MCF 10A (cell line): ENCODE measurements at regions of chr7 and their contacts with region 1.

Region 1: DNA sequence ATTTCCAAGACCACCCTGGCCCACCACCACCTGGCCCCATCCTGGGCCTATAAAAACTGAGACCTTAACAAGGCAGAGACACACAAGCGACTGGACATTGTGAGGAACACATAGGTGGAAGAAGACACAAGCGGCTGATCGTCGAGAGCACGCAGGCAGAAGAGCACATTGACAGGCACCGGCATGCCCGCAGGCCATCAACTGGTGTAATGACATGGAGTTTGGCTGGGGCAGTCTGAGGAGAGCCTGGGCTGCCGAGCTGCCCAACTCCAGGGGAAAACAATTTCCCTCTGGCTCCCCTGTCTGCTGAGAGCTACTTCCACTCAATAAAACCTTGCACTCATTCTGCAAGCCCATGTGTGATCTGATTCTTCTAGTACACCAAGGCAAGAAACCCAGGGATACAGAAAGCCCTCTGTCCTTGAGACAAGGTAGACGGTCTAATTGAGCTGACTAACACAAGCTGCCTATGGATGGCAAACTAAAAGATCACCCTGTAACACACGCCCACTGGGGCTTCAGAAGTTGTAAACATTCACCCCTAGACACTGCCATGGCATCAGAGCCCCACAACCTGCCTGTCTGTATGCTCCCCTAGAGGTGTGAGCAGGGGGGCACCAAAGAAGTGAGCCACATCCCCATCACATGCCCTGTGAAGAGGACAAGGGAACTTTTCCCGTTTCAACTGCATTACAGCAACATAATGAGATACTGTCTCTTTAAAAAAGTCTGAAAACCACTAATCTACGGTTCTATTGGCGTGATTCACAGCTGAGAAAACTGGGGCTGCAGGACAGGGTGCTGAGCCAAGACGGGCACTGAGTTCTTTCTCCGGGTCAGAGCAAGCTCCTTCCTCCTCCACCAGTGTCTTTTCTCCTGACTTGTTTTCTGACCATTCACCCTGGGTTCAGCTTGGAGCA is 18.5 kb upstream of the TNS3 start:
- DNase-seq: peak; percentile 85
- H3K4me3 Mint-ChIP-seq: peak overlapping the region; percentile 63
- H3K27ac Mint-ChIP-seq: peak overlapping the region; percentile 98
- H3K4me1 Mint-ChIP-seq: peaks cover 64% of the 10 kb centered on the region
- H3K27me3 Mint-ChIP-seq: no peaks in the 10 kb centered on the region
- CTCF ChIP-seq: no peak

Region 2: DNA sequence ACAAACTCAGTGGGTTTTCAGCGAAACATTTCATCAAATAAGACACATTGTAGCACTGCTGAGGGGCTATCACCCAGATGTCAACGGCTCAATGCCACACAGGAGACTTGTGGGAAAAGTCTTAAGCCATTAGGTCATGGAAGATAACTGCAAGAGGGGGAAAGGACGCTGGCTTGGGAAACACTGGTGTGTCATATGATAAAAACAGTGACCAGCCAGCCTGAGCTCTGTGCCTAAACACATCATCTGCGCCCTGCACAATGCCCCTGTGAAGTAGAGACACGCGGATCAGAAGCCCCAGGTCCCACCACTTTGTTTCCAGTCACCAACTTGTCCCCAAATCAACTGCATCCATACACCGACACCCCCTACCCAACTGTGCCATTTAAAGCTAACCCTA is 135.3 kb before region 1 on chr7:
- CTCF ChIA-PET with region 1: no interaction called
- POLR2A ChIA-PET with region 1: no interaction called
- intact Hi-C with region 1: no loop called
- DNase-seq: no peak
- H3K4me3 Mint-ChIP-seq: no peak overlapping the region
- H3K27ac Mint-ChIP-seq: no peak overlapping the region
- H3K4me1 Mint-ChIP-seq: peaks cover 10% of the 10 kb centered on the region
- H3K27me3 Mint-ChIP-seq: no peaks in the 10 kb centered on the region
- CTCF ChIP-seq: no peak

Region 3: DNA sequence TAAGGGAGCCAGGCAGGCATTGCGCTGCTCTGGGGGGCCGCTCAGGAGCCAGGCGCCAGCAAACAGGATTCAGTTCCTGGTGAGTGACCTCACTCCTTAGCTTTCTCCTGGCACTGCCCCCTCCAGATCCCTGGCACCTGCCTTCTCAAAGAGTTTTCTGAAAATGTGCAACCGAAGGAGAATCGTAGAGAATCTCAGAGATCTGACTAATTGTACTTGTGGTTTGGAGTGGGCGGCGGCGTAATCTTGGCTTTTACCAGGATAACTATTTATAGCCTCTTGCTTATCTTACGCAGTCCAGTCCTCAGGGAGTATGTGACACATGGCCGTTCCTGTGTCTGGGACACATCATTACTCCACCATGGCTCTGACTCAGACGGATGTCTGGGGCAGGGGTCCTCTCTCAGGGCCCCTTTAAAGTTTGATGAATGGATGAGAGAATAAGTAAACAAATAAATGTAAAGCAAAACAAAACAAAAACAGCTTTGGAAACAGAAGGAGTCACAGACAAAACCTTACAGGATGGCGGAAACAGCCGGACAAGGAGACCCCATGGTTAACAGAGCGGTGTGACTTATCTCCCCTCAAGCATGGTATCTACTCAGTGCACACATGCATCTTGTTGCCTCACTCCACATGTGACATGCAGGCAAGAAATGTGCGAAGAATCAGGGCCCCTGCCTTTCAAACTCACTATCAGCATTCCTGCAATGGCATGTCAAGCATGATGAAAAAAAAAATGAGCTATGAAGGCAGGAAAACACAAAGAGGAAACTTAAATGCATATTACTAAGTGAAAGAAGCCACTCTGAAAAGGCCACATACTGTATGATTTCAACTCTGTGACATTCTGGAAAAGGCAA is 118.2 kb before region 1 on chr7:
- CTCF ChIA-PET with region 1: no interaction called
- POLR2A ChIA-PET with region 1: no interaction called
- intact Hi-C with region 1: loop called (anchors 5 kb)
- DNase-seq: peak; percentile 85
- H3K4me3 Mint-ChIP-seq: peak overlapping the region; percentile 17
- H3K27ac Mint-ChIP-seq: peak overlapping the region; percentile 80
- H3K4me1 Mint-ChIP-seq: peaks cover 33% of the 10 kb centered on the region
- H3K27me3 Mint-ChIP-seq: no peaks in the 10 kb centered on the region
- CTCF ChIP-seq: no peak

Region 4: DNA sequence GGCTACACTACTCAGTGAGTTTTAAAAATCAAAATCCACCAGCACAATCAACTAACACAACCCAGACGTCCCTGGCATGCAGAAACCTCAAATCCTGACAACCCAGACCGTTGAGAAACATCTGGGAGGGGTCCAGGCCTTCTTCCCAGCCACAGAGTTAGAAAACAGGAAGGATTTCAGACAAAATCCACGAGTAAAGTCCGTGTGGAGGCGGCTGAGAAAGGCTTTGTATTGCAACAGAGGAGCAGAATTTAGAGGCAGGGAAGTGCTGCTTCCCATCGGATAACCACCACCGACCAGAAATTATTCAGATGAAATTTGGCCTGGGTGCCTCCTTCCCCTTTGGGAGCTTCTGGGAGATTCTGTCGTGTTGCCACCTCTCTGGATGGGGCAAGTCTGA is 80.1 kb before region 1 on chr7:
- CTCF ChIA-PET with region 1: no interaction called
- POLR2A ChIA-PET with region 1: no interaction called
- intact Hi-C with region 1: no loop called
- DNase-seq: peak; percentile 43
- H3K4me3 Mint-ChIP-seq: no peak overlapping the region
- H3K27ac Mint-ChIP-seq: peak overlapping the region; percentile 61
- H3K4me1 Mint-ChIP-seq: no peaks in the 10 kb centered on the region
- H3K27me3 Mint-ChIP-seq: no peaks in the 10 kb centered on the region
- CTCF ChIP-seq: no peak

Region 5: GRCh38 chr7:47581806-47582763 is 18.4 kb before region 1 on chr7 and contains the start of gene TNS3:
- CTCF ChIA-PET with region 1: interaction called, 5 read pairs
- POLR2A ChIA-PET with region 1: interaction called, 37 read pairs
- intact Hi-C with region 1: no loop called
- DNase-seq: no peak
- H3K4me3 Mint-ChIP-seq: peak within 1 kb of the TSS; percentile 94
- H3K27ac Mint-ChIP-seq: peak within 1 kb of the TSS; percentile 92
- H3K4me1 Mint-ChIP-seq: peaks cover 35% of the 10 kb centered on the region
- H3K27me3 Mint-ChIP-seq: no peaks in the 10 kb centered on the region
- CTCF ChIP-seq: peak; percentile 15
- total RNA-seq, gene TNS3: 30.1 and 33.3 TPM in 2 replicates

Region 6: DNA sequence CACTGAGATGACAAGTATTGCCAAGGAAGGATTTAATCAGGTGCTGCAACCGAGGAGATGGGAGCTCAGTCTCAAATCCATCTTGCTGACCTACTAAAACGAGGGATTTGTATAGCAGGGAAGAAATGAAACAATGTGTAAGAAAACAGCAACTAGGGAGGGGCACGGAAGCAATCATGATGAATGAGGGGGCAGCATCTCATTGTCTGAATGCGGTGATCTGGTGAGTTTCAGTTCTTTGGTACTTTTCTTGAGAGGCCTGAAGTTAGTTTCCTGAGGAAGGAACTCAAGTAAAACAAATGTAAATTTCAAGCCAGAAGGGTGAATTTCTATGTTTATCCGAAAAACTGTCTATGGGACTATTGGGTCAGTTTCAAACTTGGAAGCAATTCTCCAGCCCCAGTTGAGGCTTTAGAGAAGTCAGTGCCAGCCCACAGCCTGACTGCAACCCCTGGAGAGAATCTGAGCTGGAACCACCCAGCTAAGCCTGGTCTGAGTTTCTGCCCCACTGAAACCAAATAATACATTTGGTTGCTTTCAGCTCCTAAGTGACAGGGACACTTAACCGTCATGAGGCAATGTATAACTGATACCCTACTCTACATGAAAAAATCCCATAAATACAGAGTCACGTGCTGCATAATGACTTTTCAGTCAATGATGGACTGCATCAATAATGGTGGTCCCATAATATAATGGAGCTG is 27.3 kb after region 1 on chr7:
- CTCF ChIA-PET with region 1: no interaction called
- POLR2A ChIA-PET with region 1: no interaction called
- intact Hi-C with region 1: no loop called
- DNase-seq: no peak
- H3K4me3 Mint-ChIP-seq: no peak overlapping the region
- H3K27ac Mint-ChIP-seq: no peak overlapping the region
- H3K4me1 Mint-ChIP-seq: no peaks in the 10 kb centered on the region
- H3K27me3 Mint-ChIP-seq: no peaks in the 10 kb centered on the region
- CTCF ChIP-seq: no peak

Region 7: DNA sequence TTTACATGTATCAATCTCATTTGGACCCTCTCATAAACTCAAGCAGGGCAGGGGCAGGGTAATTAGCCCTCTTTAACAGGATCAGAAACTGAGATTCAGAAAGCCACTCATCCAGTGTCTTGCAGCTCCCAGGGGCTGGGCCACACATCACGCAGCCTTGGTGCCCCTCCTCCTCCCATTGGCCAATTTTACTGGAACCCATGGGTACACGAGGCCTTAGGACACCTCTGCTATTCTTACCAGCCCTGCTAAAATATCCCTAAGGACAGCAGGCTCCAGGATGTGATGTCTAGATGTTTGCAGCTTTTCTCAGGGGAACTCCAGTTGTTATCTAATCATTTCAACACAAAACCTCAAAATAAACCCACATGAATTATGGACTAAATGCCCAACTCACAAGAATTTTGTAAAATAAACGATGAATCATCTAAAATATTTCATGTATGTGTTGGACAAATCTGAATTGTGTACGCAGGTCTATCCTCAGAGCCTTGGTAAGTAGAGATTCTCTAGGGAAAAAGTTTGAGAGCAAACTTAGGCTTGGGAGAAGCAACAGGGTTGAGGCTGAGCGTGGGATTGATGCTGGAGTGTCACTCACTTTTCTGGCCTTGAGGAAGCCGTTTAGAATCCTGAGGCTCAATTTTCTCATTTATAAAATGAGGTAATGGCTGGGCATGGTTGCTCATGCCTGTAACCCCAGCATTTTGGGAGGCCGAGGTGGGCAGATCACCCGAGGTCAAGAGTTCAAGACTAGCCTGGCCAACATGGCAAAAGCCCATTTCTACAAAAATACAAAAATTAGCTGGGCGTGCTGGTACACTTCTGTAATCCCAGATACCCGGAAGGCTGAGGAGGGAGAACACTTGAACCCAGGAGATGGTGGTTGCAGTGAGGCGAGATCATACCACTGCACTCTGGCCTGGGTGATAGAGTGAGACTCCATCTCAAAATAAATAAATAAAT is 51.2 kb after region 1 on chr7:
- CTCF ChIA-PET with region 1: no interaction called
- POLR2A ChIA-PET with region 1: interaction called, 3 read pairs
- intact Hi-C with region 1: loop called (anchors 5 kb)
- DNase-seq: peak; percentile 95
- H3K4me3 Mint-ChIP-seq: no peak overlapping the region
- H3K27ac Mint-ChIP-seq: peak overlapping the region; percentile 86
- H3K4me1 Mint-ChIP-seq: peaks cover 31% of the 10 kb centered on the region
- H3K27me3 Mint-ChIP-seq: no peaks in the 10 kb centered on the region
- CTCF ChIP-seq: no peak

Region 8: DNA sequence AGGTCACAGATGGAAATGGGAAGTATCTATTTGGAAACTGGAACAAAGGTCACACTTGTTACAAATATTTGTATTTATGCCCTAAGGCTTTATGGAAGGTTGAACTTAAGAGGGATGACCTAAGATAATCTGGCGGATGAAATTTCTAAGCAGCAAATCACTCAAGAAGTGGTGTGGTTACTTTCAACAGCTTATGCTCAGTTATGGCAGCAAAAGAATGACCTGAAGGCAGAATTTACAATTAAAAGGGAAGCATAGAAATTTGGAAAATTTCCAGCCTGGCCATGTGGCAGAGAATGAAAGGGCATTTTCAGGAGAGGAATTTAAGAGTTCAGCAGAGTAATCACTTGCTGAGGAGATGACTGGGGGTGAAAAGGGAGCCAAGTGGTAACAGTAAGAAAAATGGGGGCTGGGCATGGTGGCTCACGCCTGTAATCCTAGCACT is 77.2 kb after region 1 on chr7:
- CTCF ChIA-PET with region 1: interaction called, 6 read pairs
- POLR2A ChIA-PET with region 1: interaction called, 13 read pairs
- intact Hi-C with region 1: no loop called
- DNase-seq: peak; percentile 30
- H3K4me3 Mint-ChIP-seq: no peak overlapping the region
- H3K27ac Mint-ChIP-seq: peak overlapping the region; percentile 78
- H3K4me1 Mint-ChIP-seq: peaks cover 30% of the 10 kb centered on the region
- H3K27me3 Mint-ChIP-seq: no peaks in the 10 kb centered on the region
- CTCF ChIP-seq: no peak

Region 9: DNA sequence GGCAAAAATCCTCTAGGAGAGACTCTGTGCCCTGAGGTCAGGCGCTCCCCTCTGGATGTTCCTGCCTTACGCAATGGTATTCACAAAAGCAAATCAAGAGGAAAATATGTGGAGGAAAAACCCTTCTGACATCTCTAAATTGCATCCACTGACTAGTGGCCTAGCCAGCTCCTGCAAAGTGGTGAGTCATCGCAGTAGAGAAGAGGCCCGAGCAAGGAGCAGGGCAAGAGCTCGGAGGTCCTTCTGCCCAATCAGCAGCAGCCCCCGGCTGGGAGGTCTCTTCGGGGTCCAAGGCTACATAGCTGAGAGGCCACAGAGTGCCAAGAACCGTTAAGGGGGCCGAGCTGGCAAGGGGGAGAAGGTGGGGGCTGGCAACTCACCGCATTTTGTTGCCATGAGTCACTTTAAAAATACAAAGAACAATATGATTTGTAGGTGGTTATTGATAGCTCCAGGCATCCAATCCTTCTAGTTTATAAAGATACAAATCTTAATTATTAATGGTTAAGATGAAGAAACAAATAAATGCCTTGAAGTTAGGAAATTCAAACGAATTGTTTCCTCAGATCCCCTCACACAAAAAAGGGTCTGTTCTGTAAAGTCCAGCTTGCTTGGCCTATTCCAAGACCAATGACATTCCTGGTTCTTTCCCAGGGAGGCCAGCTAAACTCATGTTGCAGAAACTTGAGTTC is 186.2 kb after region 1 on chr7:
- CTCF ChIA-PET with region 1: interaction called, 6 read pairs
- POLR2A ChIA-PET with region 1: interaction called, 62 read pairs
- intact Hi-C with region 1: loop called (anchors 1 kb)
- DNase-seq: peak; percentile 99
- H3K4me3 Mint-ChIP-seq: peak overlapping the region; percentile 46
- H3K27ac Mint-ChIP-seq: peak overlapping the region; percentile 97
- H3K4me1 Mint-ChIP-seq: peaks cover 47% of the 10 kb centered on the region
- H3K27me3 Mint-ChIP-seq: no peaks in the 10 kb centered on the region
- CTCF ChIP-seq: no peak